ENCODE measurements at regions of chr7 and their contacts with region 1.

Region 1: GRCh38 chr7:32891800-32892520 is 400 bp upstream of the KBTBD2 start:
- DNase-seq: peak; percentile 98
- H3K4me3 ChIP-seq: peak overlapping the region; percentile 87 to 99 (median 90)
- H3K27ac ChIP-seq: peak overlapping the region; percentile 98 to 100 (median 98)
- H3K4me1 ChIP-seq: peaks cover 3 to 49% (median 34%) of the 10 kb centered on the region in 4 donors
- H3K27me3 ChIP-seq: no peaks in the 10 kb centered on the region
- CTCF ChIP-seq: no peak
- EP300 ChIP-seq: peak in 3 of 4 donors; percentile 13 to 64 (median 33)
- POLR2A ChIP-seq: peak; percentile 67 to 80

Region 2: DNA sequence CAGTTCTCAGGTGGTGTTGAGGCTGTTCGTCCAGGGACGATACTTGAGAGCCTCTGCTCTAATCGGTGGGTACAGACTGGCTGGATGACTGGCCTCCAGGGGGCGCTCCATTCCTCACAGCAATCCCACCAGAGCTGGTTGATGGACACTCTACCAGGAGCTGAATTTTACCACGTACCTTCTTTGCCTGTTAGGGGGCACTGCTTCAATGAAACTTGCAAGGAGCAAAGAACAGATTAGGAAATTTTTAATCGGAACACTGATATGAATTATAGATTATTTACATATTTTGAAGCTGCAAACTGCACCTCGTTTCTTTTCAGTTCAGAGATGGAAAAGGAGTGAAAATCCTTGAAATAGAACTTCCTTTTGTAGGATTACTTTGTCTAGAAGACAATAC is 45.3 kb before region 1 on chr7:
- intact Hi-C with region 1: loop called (anchors 5 kb)
- DNase-seq: peak; percentile 94
- H3K4me3 ChIP-seq: no peak overlapping the region
- H3K27ac ChIP-seq: no peak overlapping the region
- H3K4me1 ChIP-seq: peaks cover 0 to 7% (median 2%) of the 10 kb centered on the region in 4 donors
- H3K27me3 ChIP-seq: no peaks in the 10 kb centered on the region
- CTCF ChIP-seq: peak; percentile 84 to 91 (median 87)
- EP300 ChIP-seq: no peak
- POLR2A ChIP-seq: no peak

Region 3: DNA sequence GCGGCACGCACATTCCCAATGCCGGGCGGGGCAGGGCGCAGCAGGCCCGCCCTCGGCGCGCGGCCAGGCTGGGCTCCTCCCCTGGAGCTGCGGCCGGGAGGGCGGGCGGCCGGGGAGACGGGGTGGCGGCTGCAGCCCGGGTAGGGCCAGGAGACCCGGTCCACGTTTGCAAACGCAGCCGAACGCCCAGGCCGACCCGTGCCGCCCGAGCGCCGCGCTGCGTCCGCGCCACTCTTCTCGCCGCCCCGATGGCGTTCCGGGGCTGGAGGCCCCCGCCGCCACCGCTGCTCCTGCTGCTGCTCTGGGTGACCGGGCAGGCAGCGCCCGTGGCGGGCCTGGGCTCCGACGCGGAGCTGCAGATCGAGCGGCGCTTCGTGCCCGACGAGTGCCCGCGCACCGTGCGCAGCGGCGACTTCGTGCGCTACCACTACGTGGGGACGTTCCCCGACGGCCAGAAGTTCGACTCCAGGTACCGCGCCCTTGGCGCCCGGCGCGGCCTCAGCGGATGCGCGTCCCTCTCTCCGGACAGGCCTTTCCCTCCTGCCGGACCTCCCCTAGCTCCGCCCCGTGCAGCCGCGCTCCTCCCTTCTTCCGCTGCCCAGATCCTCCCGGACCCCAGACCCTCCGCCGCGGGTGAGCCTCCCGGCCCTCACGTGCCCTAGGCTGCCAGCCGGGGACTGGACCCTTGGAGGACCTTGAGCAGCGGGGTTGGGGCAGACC is 65.5 kb after region 1 on chr7 and contains the start of gene FKBP9:
- intact Hi-C with region 1: loop called (anchors 5 kb)
- DNase-seq: peak; percentile 89
- H3K4me3 ChIP-seq: peak within 1 kb of the TSS; percentile 61 to 96 (median 82)
- H3K27ac ChIP-seq: peak within 1 kb of the TSS; percentile 90 to 93 (median 92)
- H3K4me1 ChIP-seq: peaks cover 0 to 16% (median 11%) of the 10 kb centered on the region in 4 donors
- H3K27me3 ChIP-seq: no peaks in the 10 kb centered on the region
- CTCF ChIP-seq: no peak
- EP300 ChIP-seq: no peak
- POLR2A ChIP-seq: peak in 1 of 2 donors; percentile 59
- total RNA-seq, gene FKBP9: 79.6 to 161 (median 114) TPM

Region 4: DNA sequence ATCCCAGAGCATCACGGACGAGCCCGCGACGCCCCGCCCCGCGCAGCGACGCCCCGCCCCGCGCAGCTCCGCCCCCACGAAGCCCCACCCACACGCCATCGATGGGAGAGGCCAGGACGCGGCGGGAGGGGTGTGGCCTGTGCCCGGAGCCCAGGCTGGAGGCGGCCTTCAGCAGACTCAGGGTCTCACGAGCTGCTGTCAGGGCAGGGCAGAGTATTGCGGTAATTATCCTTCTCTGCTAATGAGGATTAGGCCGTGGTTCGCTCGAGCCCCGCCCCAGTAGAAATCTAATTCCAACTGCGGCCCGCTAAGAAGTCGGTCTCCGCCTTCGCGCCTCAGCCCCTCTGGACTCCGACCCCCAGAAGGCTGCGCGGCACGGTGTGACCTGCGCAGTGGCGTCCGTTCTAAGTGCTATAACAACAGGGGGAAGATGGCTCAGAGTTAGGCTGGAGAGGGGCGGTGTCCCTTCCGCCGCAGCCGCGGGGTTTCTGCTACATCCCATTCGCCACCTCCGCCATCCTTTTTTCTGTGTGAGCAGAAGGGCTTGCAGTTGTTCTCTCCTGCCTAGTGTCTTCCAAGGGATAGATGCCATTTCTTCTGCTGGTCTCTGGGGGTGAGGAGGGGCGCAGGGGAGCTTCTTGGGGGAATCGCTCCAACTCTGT is 171.0 kb after region 1 on chr7:
- intact Hi-C with region 1: loop called (anchors 5 kb)
- DNase-seq: peak; percentile 96
- H3K4me3 ChIP-seq: peak overlapping the region; percentile 64 to 74 (median 68)
- H3K27ac ChIP-seq: peak overlapping the region; percentile 89 to 97 (median 92)
- H3K4me1 ChIP-seq: peaks cover 0 to 30% (median 17%) of the 10 kb centered on the region in 4 donors
- H3K27me3 ChIP-seq: no peaks in the 10 kb centered on the region
- CTCF ChIP-seq: no peak
- EP300 ChIP-seq: no peak
- POLR2A ChIP-seq: peak; percentile 53 to 54

Measured in sigmoid colon (tissue), 7 donors.